T-cell (primary cell): ENCODE measurements at regions of chr2 and their contacts with region 1.

Region 1: DNA sequence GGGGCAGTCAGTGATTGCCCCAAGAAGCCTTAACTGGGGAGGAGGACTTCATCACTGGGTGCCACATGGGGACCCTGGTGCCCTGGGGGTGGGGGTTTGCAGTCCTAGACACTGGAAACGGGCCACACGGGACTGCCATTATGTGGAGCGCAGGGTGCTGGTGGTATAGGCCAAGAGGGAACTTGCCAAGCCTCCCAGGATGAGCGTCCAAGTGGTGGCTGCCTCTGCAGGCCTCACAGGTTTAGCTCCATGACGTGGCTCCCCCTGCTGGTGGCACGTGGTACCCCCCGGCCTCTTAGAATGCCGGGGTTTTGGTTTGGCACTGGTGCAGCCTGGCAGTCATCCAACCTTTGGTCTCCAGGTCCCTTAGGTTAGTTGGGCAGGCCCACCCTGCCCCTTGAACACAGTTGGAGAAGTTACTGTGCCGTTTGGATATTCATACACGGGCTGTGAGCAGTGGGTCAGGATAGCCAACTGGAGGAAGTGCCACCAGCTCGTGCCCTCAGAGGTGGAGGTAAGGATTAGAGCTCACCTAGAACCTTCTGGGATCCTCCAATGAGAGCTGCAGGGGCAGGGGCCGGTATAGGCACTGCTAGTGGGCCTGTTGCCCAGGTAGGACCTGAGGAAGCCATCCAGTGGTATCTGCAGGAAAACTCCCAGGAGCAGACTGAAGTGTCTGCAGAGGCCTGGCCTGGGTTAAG is 5.6 kb downstream of the PTMA start:
- DNase-seq: peak; percentile 75 to 95 (median 89)
- ATAC-seq: peak; percentile 39 to 44 (median 40)
- H3K4me3 ChIP-seq: no peak overlapping the region
- H3K4me3 Mint-ChIP-seq: peak overlapping the region; percentile 29 to 63 (median 61)
- H3K27ac ChIP-seq: peak overlapping the region; percentile 73
- H3K27ac Mint-ChIP-seq: peak overlapping the region; percentile 85 to 92
- H3K4me1 ChIP-seq: peaks cover 19 to 49% of the 10 kb centered on the region in 2 experiments
- H3K4me1 Mint-ChIP-seq: peaks cover 34 to 47% (median 39%) of the 10 kb centered on the region in 3 donors
- H3K27me3 ChIP-seq: peaks cover 0 to 2% of the 10 kb centered on the region in 2 experiments
- H3K27me3 Mint-ChIP-seq: no peaks in the 10 kb centered on the region

Region 2: GRCh38 chr2:230411570-230412370 is 1302.1 kb before region 1 on chr2:
- CTCF ChIA-PET with region 1: no interaction called
- POLR2A ChIA-PET with region 1: no interaction called
- DNase-seq: peak in 34 of 35 experiments; percentile 21 to 78 (median 43)
- ATAC-seq: peak; percentile 70 to 78 (median 74)
- H3K4me3 ChIP-seq: peak overlapping the region; percentile 69 to 78
- H3K4me3 Mint-ChIP-seq: peak overlapping the region; percentile 91 to 99 (median 98)
- H3K27ac ChIP-seq: peak overlapping the region; percentile 86
- H3K27ac Mint-ChIP-seq: peak overlapping the region; percentile 99 to 100
- H3K4me1 ChIP-seq: peaks cover 3 to 59% of the 10 kb centered on the region in 2 experiments
- H3K4me1 Mint-ChIP-seq: peaks cover 76 to 90% (median 77%) of the 10 kb centered on the region in 3 donors
- H3K27me3 ChIP-seq: no peaks in the 10 kb centered on the region
- H3K27me3 Mint-ChIP-seq: no peaks in the 10 kb centered on the region

Region 3: DNA sequence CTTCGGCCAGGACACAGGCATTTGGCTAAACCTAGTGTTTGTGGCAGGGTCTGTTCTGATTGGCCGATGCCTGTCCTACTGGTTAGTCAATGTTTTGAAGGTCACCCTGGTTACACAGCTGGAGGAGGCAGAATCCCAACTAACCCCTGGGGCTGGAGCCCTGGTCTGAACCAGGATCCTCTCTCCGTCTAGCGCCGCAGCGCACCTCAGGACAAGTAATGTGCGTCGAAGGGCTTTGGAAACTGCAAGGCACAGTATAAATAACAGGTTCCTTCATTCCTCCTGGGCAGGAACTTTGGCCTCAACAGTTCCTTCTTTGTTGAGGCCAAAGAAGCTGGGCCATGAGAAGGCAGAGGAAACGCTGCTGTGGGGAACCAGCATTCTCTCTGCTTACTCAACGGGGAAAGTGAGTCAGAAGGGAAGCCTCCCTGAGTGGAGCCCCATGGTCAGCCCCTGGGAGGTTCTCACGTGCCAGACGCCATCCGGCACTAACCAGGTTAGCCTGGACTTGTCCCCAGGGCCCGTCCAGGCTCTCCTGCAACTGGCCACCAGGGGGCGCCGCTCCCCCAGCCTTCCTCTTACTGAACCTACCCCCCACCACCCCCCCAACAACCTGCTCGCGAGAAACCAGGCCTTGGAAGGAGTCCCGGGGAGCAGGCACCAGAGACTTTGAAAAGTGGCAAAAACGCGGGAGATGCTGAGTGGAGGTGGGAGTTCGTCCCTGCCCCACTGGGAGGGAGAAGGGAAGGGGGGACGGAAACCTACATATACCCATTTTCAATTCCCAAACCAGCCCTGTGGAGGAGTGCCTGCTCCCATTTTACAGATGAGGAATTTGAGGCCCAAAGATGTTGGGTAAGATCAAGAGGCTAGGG is 101.5 kb before region 1 on chr2:
- CTCF ChIA-PET with region 1: interaction called, 11 to 27 read pairs
- POLR2A ChIA-PET with region 1: interaction called, 3 read pairs
- DNase-seq: peak; percentile 62 to 92 (median 84)
- ATAC-seq: peak; percentile 63 to 73 (median 71)
- H3K4me3 ChIP-seq: peak overlapping the region; percentile 55 to 67
- H3K4me3 Mint-ChIP-seq: peak overlapping the region; percentile 61 to 76 (median 63)
- H3K27ac ChIP-seq: peak overlapping the region; percentile 61
- H3K27ac Mint-ChIP-seq: peak overlapping the region; percentile 22 to 55
- H3K4me1 ChIP-seq: peaks cover 9 to 28% of the 10 kb centered on the region in 2 experiments
- H3K4me1 Mint-ChIP-seq: peaks cover 34 to 39% (median 35%) of the 10 kb centered on the region in 3 donors
- H3K27me3 ChIP-seq: peaks cover 0 to 18% of the 10 kb centered on the region in 2 experiments
- H3K27me3 Mint-ChIP-seq: no peaks in the 10 kb centered on the region

Region 4: GRCh38 chr2:231674587-231675338 is 39.1 kb before region 1 on chr2:
- CTCF ChIA-PET with region 1: interaction called, 91 to 150 read pairs
- POLR2A ChIA-PET with region 1: interaction called, 4 read pairs
- DNase-seq: peak in 30 of 35 experiments; percentile 8 to 66 (median 36)
- ATAC-seq: peak; percentile 65 to 71 (median 68)
- H3K4me3 ChIP-seq: no peak overlapping the region
- H3K4me3 Mint-ChIP-seq: no peak overlapping the region
- H3K27ac ChIP-seq: no peak overlapping the region
- H3K27ac Mint-ChIP-seq: no peak overlapping the region
- H3K4me1 ChIP-seq: peaks cover 2 to 12% of the 10 kb centered on the region in 2 experiments
- H3K4me1 Mint-ChIP-seq: peaks cover 6 to 8% (median 8%) of the 10 kb centered on the region in 3 donors
- H3K27me3 ChIP-seq: peaks cover 0 to 39% of the 10 kb centered on the region in 2 experiments
- H3K27me3 Mint-ChIP-seq: peaks cover 0 to 4% of the 10 kb centered on the region in 2 donors

Region 5: GRCh38 chr2:231687133-231687852 is 26.6 kb before region 1 on chr2:
- CTCF ChIA-PET with region 1: interaction called, 6 to 10 read pairs
- POLR2A ChIA-PET with region 1: interaction called in 1 of 2 experiments, 3 read pairs
- DNase-seq: peak in 33 of 35 experiments; percentile 24 to 76 (median 55)
- ATAC-seq: peak; percentile 87 to 96 (median 88)
- H3K4me3 ChIP-seq: no peak overlapping the region
- H3K4me3 Mint-ChIP-seq: no peak overlapping the region
- H3K27ac ChIP-seq: no peak overlapping the region
- H3K27ac Mint-ChIP-seq: no peak overlapping the region
- H3K4me1 ChIP-seq: peaks cover 2 to 8% of the 10 kb centered on the region in 2 experiments
- H3K4me1 Mint-ChIP-seq: peaks cover 3 to 11% (median 8%) of the 10 kb centered on the region in 3 donors
- H3K27me3 ChIP-seq: peaks cover 0 to 24% of the 10 kb centered on the region in 2 experiments
- H3K27me3 Mint-ChIP-seq: peaks cover 5 to 6% of the 10 kb centered on the region in 2 donors